Activated CD4-positive, alpha-beta T cell treated with anti-CD3 and anti-CD28 coated beads for 36 hours (primary cell): ENCODE measurements at regions of chr16 and their contacts with region 1.

Region 1: GRCh38 chr16:9545522-9546437 is 454.3 kb downstream of the HAPSTR1 start:
- DNase-seq: no peak
- ATAC-seq: no peak
- H3K4me3 Mint-ChIP-seq: no peak overlapping the region
- H3K27ac Mint-ChIP-seq: no peak overlapping the region
- H3K4me1 Mint-ChIP-seq: no peaks in the 10 kb centered on the region
- H3K27me3 Mint-ChIP-seq: no peaks in the 10 kb centered on the region

Region 2: DNA sequence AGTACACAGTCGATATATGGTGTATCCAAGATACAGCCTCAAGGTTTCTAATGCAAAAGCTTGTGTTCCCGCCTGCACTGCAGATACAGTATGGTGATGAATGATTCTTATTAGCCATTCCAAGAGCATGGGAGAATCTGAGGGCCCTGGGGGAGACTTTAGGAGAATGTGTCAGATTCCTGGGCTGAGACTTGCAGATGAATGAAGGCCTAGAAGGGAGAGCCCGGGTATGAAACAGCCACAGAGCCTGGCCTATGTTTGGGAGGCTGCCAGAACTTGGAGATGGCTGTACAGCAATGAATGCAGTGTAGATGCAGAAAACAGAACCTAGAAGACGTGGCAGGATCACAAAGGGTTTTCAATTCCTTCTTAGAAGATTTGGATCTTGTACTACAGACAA is 56.4 kb after region 1 on chr16:
- CTCF ChIA-PET with region 1: no interaction called
- POLR2A ChIA-PET with region 1: no interaction called
- intact Hi-C with region 1: loop called in 1 of 2 experiments (anchors 10 kb)
- DNase-seq: no peak
- ATAC-seq: no peak
- H3K4me3 Mint-ChIP-seq: no peak overlapping the region
- H3K27ac Mint-ChIP-seq: no peak overlapping the region
- H3K4me1 Mint-ChIP-seq: no peaks in the 10 kb centered on the region
- H3K27me3 Mint-ChIP-seq: no peaks in the 10 kb centered on the region